ENCODE measurements at regions of chr15 and their contacts with region 1.

Region 1: DNA sequence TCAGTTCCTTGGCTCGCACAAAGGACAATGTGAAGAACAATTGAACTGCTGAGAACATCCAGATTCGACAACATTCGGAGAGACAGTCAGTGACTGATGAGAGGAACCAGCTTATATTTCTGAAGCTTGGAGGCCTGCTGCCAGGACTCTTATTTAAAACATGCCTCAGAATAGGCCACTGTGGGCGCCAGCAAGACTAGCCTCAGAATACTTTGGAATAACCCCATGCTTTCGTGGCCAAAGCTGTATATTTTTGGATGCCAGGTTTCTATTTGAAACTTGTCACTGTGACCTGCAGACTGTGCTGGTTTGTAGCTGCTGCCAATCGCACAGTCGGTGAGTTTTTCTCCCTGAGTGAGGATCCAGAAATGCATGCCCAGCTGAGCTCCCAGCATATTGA is 129.9 kb upstream of the UBE3A start:
- DNase-seq: no peak
- ATAC-seq: no peak
- H3K4me3 ChIP-seq: no peak overlapping the region
- H3K27ac ChIP-seq: no peak overlapping the region
- H3K4me1 ChIP-seq: no peaks in the 10 kb centered on the region
- H3K27me3 ChIP-seq: no peaks in the 10 kb centered on the region
- CTCF ChIP-seq: no peak
- EP300 ChIP-seq: no peak
- POLR2A ChIP-seq: no peak
- RAD21 ChIP-seq: no peak

Region 2: DNA sequence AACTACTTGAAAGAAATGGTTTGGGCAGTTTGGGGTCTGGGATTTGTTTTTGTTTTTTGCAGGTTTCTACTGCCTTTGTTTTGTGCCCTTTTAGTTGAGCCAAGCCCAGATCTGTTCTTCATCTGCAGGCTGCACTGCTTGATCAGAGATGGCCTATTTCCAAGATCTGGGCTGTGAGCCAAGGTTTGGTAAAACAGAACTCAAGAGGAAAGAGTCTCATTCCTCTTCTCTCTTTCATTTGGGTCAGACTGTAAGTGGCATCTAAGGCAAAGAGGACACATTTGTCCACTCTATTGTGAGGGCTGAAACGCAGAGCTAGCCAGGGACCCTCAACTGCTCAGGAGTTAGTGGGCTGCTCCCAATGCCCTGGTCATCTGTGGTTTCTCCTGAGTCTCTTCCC is 25.6 kb before region 1 on chr15:
- CTCF ChIA-PET with region 1: no interaction called
- POLR2A ChIA-PET with region 1: no interaction called
- RAD21 ChIA-PET with region 1: no interaction called
- SMC1A ChIA-PET with region 1: no interaction called
- in situ Hi-C with region 1: no loop called
- intact Hi-C with region 1: no loop called
- DNase-seq: no peak
- ATAC-seq: no peak
- H3K4me3 ChIP-seq: no peak overlapping the region
- H3K27ac ChIP-seq: no peak overlapping the region
- H3K4me1 ChIP-seq: no peaks in the 10 kb centered on the region
- H3K27me3 ChIP-seq: no peaks in the 10 kb centered on the region
- CTCF ChIP-seq: no peak
- EP300 ChIP-seq: no peak
- POLR2A ChIP-seq: no peak
- RAD21 ChIP-seq: no peak

Region 3: DNA sequence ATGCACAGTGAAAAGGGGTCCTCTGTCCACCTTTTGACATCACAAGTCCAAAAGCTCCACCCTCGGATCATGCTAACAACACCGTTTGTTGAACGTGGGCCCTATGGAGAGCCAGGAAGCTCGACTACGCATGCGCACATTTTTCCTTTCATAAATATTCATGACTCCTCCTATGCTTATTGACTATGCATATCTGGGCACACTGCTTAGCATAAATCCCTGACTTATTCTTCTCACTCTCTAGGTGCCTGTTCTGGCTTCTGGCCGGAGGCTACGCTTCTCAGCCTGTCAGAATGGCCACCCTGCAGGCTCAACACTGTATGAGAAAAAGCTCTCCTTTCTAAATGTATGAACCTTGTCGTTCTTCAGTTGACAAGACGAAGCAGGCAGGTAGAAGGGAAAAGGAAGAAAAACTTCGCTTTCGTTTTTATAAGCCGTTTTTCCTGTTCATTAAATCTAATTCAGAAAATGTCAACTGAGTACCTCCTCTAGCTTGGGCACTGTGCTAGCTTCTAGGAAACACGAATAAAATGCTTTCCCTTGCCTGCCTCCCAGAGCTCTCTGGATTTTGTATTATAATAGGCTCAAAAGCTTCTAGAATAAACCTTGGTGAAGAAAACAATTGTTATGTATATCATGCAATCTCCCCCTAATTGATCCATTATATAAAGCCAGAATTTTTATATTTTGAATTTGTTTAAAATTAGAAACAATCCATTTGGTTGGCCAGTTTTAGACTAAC is 86.6 kb after region 1 on chr15:
- CTCF ChIA-PET with region 1: no interaction called
- POLR2A ChIA-PET with region 1: no interaction called
- RAD21 ChIA-PET with region 1: no interaction called
- SMC1A ChIA-PET with region 1: no interaction called
- in situ Hi-C with region 1: no loop called
- intact Hi-C with region 1: loop called (anchors 10 kb)
- DNase-seq: no peak
- ATAC-seq: no peak
- H3K4me3 ChIP-seq: no peak overlapping the region
- H3K27ac ChIP-seq: no peak overlapping the region
- H3K4me1 ChIP-seq: no peaks in the 10 kb centered on the region
- H3K27me3 ChIP-seq: no peaks in the 10 kb centered on the region
- CTCF ChIP-seq: no peak
- EP300 ChIP-seq: no peak
- POLR2A ChIP-seq: no peak
- RAD21 ChIP-seq: no peak